HCT116 (cell line): ENCODE measurements at regions of chr10 and their contacts with region 1.

Region 1: DNA sequence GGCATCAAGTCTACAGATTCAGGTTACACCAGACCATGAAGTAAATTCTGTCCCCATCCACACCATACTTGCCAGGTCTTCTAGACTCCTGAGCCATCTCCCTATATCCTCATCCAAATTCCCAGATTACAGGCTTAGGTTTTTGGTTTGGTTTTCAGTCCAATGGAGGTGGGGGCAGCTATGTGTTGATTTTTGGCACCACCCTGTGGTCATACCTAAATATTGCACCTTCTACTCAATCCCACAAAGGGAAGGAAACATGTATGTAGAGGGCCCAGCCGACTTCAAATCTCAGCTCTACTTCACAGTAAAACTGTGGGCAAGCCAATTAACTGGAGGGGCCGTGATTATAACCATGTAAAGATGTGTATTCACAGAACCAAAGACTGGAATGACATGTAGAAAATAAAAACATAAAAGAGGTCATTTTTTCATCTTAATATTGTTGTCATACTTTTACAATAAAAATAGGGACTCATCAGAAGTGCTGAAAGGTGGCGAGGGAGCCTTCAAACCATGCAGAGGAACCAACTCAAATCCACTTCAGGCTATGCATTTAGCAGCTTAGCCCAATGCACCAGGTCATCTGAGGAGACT is 19.8 kb downstream of the ERCC6 start:
- DNase-seq: peak; percentile 32
- ATAC-seq: peak; percentile 87
- H3K4me3 ChIP-seq: no peak overlapping the region
- H3K27ac ChIP-seq: no peak overlapping the region
- H3K4me1 ChIP-seq: no peaks in the 10 kb centered on the region
- H3K27me3 ChIP-seq: no peaks in the 10 kb centered on the region
- CTCF ChIP-seq: peak; percentile 61 to 73 (median 68)
- POLR2A ChIP-seq: no peak
- RAD21 ChIP-seq: peak; percentile 72

Region 2: GRCh38 chr10:48551861-48552591 is 967.1 kb before region 1 on chr10:
- CTCF ChIA-PET with region 1: no interaction called
- POLR2A ChIA-PET with region 1: no interaction called
- RAD21 ChIA-PET with region 1: no interaction called
- intact Hi-C with region 1: loop called (anchors 10 kb)
- DNase-seq: peak; percentile 15
- ATAC-seq: peak; percentile 82
- H3K4me3 ChIP-seq: no peak overlapping the region
- H3K27ac ChIP-seq: no peak overlapping the region
- H3K4me1 ChIP-seq: no peaks in the 10 kb centered on the region
- H3K27me3 ChIP-seq: no peaks in the 10 kb centered on the region
- CTCF ChIP-seq: peak; percentile 63 to 94 (median 75)
- POLR2A ChIP-seq: no peak
- RAD21 ChIP-seq: peak; percentile 76

Region 3: DNA sequence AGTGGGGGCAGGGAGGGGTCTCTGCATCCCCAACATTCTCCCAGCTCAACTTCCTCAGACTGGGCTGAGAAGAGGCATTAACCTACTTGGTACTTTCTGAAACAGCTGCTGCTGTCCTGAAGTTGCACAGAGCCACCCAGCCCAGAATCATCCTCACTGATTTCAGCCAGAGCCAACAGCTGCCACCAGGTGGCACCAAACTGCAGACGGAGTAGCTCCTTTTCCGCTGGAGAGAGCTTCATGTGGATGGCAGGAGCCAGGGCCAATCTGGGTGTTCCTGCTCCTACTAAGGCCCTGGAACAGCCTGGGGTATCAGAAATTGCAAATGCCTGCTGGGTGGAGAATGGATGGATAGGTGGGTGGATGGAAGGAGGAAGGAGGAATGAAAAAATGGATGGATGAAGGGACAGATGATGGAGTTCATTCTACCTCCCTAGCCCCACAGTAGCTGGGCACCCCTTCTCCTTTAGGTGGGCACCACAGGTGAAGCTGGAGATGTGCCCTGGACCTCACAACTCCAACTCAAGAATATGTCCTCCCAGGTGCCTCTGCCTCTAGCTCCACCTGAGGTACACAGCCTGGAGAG is 111.4 kb before region 1 on chr10:
- CTCF ChIA-PET with region 1: interaction called, 123 read pairs
- POLR2A ChIA-PET with region 1: no interaction called
- RAD21 ChIA-PET with region 1: interaction called, 6 to 9 read pairs
- intact Hi-C with region 1: loop called (anchors 1 kb)
- DNase-seq: peak; percentile 57
- ATAC-seq: peak; percentile 93
- H3K4me3 ChIP-seq: no peak overlapping the region
- H3K27ac ChIP-seq: no peak overlapping the region
- H3K4me1 ChIP-seq: no peaks in the 10 kb centered on the region
- H3K27me3 ChIP-seq: peaks cover 36% of the 10 kb centered on the region
- CTCF ChIP-seq: peak; percentile 85 to 96 (median 94)
- POLR2A ChIP-seq: no peak
- RAD21 ChIP-seq: peak; percentile 88

Region 4: GRCh38 chr10:49538381-49539319 is 19.6 kb after region 1 on chr10 and contains the start of gene ERCC6:
- CTCF ChIA-PET with region 1: interaction called, 12 read pairs
- POLR2A ChIA-PET with region 1: interaction called, 4 read pairs
- RAD21 ChIA-PET with region 1: no interaction called
- intact Hi-C with region 1: no loop called
- DNase-seq: peak; percentile 94
- ATAC-seq: peak; percentile 95
- H3K4me3 ChIP-seq: peak within 1 kb of the TSS; percentile 58 to 75
- H3K27ac ChIP-seq: peak within 1 kb of the TSS; percentile 59
- H3K4me1 ChIP-seq: peaks cover 10 to 22% of the 10 kb centered on the region in 2 experiments
- H3K27me3 ChIP-seq: no peaks in the 10 kb centered on the region
- CTCF ChIP-seq: no peak
- POLR2A ChIP-seq: peak; percentile 84
- RAD21 ChIP-seq: no peak
- total RNA-seq, gene ERCC6: 16.4 TPM